OCI-LY7 (cell line): ENCODE measurements at regions of chr22 and their contacts with region 1.

Region 1: DNA sequence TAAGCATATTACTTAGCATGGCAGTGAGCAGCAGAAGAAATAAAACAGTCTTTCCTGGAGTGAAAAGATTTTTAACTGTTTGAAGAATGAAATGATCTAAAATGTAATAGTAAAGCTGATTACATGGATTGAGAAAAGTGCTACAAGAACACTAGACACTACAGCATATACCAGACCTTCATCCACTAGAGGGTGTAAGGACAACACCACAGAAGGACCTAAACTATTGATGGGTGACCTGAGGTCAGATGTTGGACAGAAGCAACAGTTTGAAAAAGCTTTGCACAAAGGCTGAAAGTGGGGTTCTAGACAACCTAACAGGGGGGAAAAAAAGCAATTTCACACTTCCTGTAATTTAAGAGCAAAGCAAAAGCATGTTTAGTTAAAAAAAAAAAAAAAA is 97.7 kb downstream of the RBFOX2 start:
- DNase-seq: peak; percentile 80
- H3K4me3 ChIP-seq: no peak overlapping the region
- H3K27ac ChIP-seq: no peak overlapping the region
- H3K4me1 ChIP-seq: peaks cover 7% of the 10 kb centered on the region
- CTCF ChIP-seq: peak; percentile 93

Region 2: GRCh38 chr22:36028646-36029405 is 97.9 kb after region 1 on chr22 and contains the start of gene RBFOX2:
- CTCF ChIA-PET with region 1: no interaction called
- POLR2A ChIA-PET with region 1: no interaction called
- intact Hi-C with region 1: loop called (anchors 2 kb)
- DNase-seq: peak; percentile 77
- H3K4me3 ChIP-seq: peak within 1 kb of the TSS; percentile 96
- H3K27ac ChIP-seq: peak within 1 kb of the TSS; percentile 65
- H3K4me1 ChIP-seq: peaks cover 28% of the 10 kb centered on the region
- CTCF ChIP-seq: no peak
- total RNA-seq, gene RBFOX2: 74.3 and 78.7 TPM in 2 replicates

Region 3: DNA sequence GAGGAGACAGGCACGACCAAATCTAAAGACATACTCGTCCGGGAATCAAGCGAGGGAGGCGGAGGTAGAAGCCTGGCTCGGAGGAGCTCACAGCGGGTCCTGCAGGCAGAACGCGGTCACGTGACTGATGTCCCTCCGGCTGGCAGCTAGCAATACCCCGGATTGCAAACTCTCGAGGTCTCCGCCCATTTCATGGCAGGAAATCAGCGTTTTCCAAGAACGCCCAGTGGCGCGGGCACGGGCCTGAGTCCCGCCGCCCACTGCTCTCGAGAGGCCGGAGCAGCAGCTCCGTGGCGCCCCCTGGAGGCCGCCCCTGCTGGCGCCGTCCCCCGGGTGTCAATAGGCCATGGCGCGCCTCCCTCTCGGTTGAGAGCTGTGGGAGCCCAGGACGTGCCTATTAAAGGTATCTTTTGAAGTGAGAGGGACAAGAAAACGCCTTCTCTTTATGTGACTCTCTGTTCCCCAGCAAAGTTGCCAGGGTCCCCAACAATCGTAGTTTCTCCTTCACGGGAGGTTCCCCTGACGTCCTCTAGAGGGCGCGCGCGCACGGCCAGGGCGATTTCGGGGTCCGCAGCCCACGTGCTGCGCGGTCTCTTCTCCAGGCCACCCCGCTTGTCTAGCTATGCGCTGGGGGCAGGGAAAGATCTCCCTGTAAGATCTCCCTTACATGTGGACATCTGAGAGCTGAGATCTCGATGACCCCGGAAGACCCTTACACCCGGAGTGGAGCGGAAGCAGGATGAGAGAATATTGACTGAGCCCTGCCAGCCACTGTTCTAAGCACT is 135.0 kb after region 1 on chr22:
- CTCF ChIA-PET with region 1: no interaction called
- POLR2A ChIA-PET with region 1: interaction called, 4 read pairs
- intact Hi-C with region 1: loop called (anchors 1 kb)
- DNase-seq: peak; percentile 81
- H3K4me3 ChIP-seq: peak overlapping the region; percentile 65
- H3K27ac ChIP-seq: no peak overlapping the region
- H3K4me1 ChIP-seq: peaks cover 10% of the 10 kb centered on the region
- CTCF ChIP-seq: peak; percentile 100

Region 4: GRCh38 chr22:36123673-36124630 is 193.0 kb after region 1 on chr22:
- CTCF ChIA-PET with region 1: no interaction called
- POLR2A ChIA-PET with region 1: no interaction called
- intact Hi-C with region 1: loop called (anchors 1 kb)
- DNase-seq: peak; percentile 95
- H3K4me3 ChIP-seq: no peak overlapping the region
- H3K27ac ChIP-seq: no peak overlapping the region
- H3K4me1 ChIP-seq: peaks cover 3% of the 10 kb centered on the region
- CTCF ChIP-seq: peak; percentile 99

Region 5: DNA sequence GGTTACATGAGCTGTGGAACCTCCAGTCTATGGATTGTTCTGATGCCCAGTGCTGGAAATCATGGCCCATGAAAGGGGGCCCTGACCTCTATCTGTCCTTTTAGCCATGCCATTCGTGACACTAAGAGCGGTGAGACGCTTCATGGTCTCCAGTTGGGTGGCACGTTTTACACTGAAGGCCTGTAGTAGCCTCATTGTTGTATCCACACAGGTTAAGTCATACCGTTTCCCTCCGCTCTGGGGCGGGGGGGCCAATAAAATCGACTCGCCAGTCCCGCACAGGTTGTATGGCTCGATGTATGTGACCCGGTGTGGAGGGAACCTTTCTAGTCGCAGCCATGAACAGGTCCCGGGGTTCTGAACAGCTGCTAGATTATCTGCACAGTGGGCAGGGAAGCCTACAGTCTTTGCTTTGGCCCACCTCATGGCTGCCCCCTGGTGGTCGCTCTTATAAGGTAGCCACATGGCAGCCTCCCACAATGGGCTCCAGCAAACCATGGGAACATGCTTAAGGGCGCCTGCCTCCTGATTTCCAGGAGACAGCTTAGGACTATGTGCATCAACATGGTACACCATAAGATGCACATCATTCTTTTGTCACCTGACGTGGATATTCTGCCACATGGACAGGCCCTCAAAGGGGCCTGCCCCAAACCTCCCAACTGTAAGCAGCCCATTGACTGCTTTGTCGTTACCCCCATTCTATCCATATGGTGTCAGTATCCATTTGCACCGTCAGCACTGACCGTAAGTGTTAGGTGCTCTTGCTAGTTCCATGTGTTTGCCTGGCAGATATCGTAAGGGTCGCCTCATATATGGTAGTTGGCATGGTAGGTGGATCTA is 249.3 kb after region 1 on chr22:
- CTCF ChIA-PET with region 1: no interaction called
- POLR2A ChIA-PET with region 1: no interaction called
- intact Hi-C with region 1: loop called (anchors 1 kb)
- DNase-seq: peak; percentile 73
- H3K4me3 ChIP-seq: no peak overlapping the region
- H3K27ac ChIP-seq: no peak overlapping the region
- H3K4me1 ChIP-seq: no peaks in the 10 kb centered on the region
- CTCF ChIP-seq: peak; percentile 88